ENCODE measurements at regions of chr1 and their contacts with region 1.

Region 1: DNA sequence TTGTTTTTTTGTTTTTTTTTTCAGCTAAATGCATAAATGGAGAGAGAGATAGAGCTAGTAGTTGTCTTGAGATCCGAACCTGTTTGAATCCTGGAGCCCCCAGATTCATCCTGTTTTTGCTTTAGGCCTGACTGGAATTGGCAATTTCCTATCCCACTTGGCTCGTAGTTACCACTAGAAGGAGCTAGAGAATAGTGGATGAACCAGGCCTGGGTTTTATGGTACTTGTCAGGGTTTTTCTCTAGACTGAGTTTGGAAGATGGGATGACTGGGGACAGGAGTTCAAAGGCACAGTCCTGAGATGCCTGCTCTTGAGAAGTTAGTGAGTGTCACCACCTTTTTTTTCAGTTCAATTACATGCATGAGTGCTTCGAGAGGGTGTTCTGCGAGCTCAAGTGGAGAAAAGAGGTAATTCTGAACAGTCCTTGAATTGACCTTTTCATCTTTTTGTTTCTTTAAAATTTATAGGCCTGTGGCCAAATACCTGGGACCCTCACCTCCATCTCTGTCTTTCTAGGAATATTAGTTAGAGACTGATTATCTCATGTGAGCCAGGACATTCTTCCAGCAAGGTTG is 23.4 kb downstream of the CELF3 start:
- DNase-seq: no peak
- H3K4me3 ChIP-seq: no peak overlapping the region
- H3K27ac ChIP-seq: no peak overlapping the region
- H3K4me1 ChIP-seq: no peaks in the 10 kb centered on the region
- H3K27me3 ChIP-seq: no peaks in the 10 kb centered on the region
- CTCF ChIP-seq: peak; percentile 72

Region 2: GRCh38 chr1:151222130-151222529 is 471.0 kb before region 1 on chr1:
- CTCF ChIA-PET with region 1: no interaction called
- POLR2A ChIA-PET with region 1: interaction called, 10 read pairs
- intact Hi-C with region 1: no loop called
- DNase-seq: no peak
- H3K4me3 ChIP-seq: no peak overlapping the region
- H3K27ac ChIP-seq: no peak overlapping the region
- H3K4me1 ChIP-seq: no peaks in the 10 kb centered on the region
- H3K27me3 ChIP-seq: no peaks in the 10 kb centered on the region
- CTCF ChIP-seq: no peak

Region 3: GRCh38 chr1:151594143-151594625 is 99.0 kb before region 1 on chr1:
- CTCF ChIA-PET with region 1: interaction called, 5 read pairs
- POLR2A ChIA-PET with region 1: no interaction called
- intact Hi-C with region 1: loop called (anchors 5 kb)
- DNase-seq: peak; percentile 54 to 82
- H3K4me3 ChIP-seq: no peak overlapping the region
- H3K27ac ChIP-seq: no peak overlapping the region
- H3K4me1 ChIP-seq: peaks cover 30% of the 10 kb centered on the region
- H3K27me3 ChIP-seq: no peaks in the 10 kb centered on the region
- CTCF ChIP-seq: peak; percentile 94

Region 4: DNA sequence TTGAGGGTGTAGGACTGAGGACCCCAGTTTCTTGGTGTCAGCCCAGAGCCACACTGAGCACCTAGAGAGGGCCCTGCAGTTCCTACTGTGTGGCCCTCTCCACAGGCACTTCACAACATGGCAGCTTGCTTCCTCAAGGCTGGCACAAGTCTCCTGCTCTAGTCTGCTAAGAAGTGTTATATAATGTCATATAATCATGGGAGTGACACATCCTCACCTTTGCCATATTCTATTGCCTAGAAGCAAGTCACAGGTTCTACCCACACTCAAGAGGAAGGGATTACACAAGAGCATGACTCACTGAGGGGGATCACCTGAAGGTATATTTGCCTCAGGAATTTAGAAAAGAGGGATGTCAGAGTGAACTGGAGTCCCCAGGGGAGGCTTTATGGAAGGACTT is 86.8 kb before region 1 on chr1:
- CTCF ChIA-PET with region 1: interaction called, 14 read pairs
- POLR2A ChIA-PET with region 1: interaction called, 8 read pairs
- intact Hi-C with region 1: no loop called
- DNase-seq: peak; percentile 63 to 99
- H3K4me3 ChIP-seq: no peak overlapping the region
- H3K27ac ChIP-seq: peak overlapping the region; percentile 82
- H3K4me1 ChIP-seq: peaks cover 49% of the 10 kb centered on the region
- H3K27me3 ChIP-seq: no peaks in the 10 kb centered on the region
- CTCF ChIP-seq: no peak

Region 5: DNA sequence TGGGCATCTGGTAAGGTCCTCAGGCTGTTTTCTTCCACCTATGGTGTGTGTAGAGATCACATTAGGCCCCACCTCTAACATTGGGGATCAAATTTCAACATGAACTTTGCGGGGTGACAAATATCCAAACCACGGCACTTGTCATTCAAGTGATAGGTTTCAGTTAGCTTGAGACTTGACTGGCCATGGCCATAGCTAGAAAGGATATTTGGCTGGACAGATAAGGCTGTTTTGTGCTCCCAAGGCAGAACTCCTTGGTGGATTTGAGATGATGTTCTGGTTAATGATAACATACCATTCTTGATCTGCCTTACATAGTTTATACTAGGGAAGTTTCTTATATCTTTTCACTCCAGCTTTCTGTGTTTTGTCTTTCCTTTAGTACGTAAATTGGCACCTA is 25.1 kb before region 1 on chr1:
- CTCF ChIA-PET with region 1: no interaction called
- POLR2A ChIA-PET with region 1: no interaction called
- intact Hi-C with region 1: no loop called
- DNase-seq: no peak
- H3K4me3 ChIP-seq: no peak overlapping the region
- H3K27ac ChIP-seq: no peak overlapping the region
- H3K4me1 ChIP-seq: no peaks in the 10 kb centered on the region
- H3K27me3 ChIP-seq: no peaks in the 10 kb centered on the region
- CTCF ChIP-seq: no peak

Region 6: DNA sequence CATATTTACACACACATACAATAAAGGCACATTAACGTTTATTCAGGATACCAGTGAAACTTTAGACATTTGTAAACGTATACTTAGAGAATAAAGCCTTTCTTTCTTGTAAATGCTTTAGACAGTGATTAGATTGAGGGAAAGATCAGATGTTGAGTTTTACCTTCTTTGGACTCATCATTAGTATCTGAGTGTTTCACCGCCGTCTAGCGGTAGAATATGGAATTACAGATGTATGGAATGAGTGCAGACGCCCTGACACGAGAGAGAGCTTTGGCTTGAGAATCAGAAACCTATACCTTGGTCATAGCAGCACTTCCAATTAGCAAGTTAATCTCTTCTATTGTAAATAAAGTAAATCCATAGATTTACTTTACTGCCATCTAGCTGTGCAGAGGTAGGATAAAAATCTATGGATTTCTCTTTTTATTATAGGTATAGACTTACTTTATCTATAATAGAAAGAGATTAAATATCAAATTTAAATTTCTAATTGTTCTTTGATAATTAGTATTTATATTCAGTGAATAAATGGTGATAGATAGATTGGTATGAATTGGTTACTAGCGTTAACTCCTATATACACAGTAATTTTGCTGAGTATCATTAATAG is 654.1 kb after region 1 on chr1:
- CTCF ChIA-PET with region 1: interaction called, 16 read pairs
- POLR2A ChIA-PET with region 1: no interaction called
- intact Hi-C with region 1: no loop called
- DNase-seq: peak; percentile 33 to 46
- H3K4me3 ChIP-seq: no peak overlapping the region
- H3K27ac ChIP-seq: no peak overlapping the region
- H3K4me1 ChIP-seq: no peaks in the 10 kb centered on the region
- H3K27me3 ChIP-seq: no peaks in the 10 kb centered on the region
- CTCF ChIP-seq: peak; percentile 92

Measured in PC-9 (cell line).